ENCODE measurements at regions of chr11 and their contacts with region 1.

Region 1: GRCh38 chr11:61384271-61385242 is 7.8 kb upstream of the TMEM216 start:
- DNase-seq: no peak
- ATAC-seq: peak in 4 of 8 donors; percentile 10 to 29 (median 21)
- H3K4me3 ChIP-seq: no peak overlapping the region
- H3K27ac ChIP-seq: no peak overlapping the region
- H3K4me1 ChIP-seq: peaks cover 0 to 8% (median 4%) of the 10 kb centered on the region in 9 donors
- H3K27me3 ChIP-seq: no peaks in the 10 kb centered on the region
- CTCF ChIP-seq: no peak

Region 2: DNA sequence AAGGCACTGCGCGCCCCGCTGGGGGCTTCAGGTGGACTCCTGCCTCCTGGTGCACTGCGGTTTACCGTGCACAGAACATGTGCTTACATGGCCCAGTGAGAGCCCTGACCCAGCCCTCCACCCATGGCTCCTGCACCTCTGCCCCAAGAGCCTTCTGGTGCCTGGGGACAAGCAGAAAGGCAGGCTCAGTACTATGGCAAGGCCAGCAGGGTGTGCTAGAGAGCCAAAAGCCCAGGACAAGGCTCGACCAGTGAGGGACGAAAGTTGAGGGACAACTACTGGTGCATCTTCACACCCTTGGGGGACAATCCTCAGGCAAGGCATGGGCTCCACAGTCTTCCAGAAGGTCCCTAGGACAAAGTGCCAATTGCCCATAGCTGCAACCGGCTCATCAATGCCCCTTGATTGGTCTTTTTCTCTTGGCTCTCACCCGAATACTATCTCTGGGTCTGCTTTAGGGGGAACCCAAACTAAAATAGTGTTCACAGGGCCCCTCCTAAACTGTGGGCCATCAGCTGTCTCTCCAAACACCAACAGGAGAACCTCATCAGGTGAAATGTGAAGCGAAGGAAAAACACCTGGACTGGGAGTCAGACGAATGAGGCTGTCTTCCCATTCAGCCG is 130.0 kb before region 1 on chr11:
- intact Hi-C with region 1: loop called in 5 of 10 experiments (anchors 5 to 10 kb)
- DNase-seq: peak; percentile 44 to 57
- ATAC-seq: peak in 7 of 8 donors; percentile 30 to 73 (median 57)
- H3K4me3 ChIP-seq: no peak overlapping the region
- H3K27ac ChIP-seq: no peak overlapping the region
- H3K4me1 ChIP-seq: peaks cover 0 to 14% (median 0%) of the 10 kb centered on the region in 9 donors
- H3K27me3 ChIP-seq: no peaks in the 10 kb centered on the region
- CTCF ChIP-seq: peak; percentile 63 to 91 (median 81)

Region 3: GRCh38 chr11:61361686-61362541 is 22.6 kb before region 1 on chr11 and contains the starts of genes CYB561A3 and TMEM138:
- intact Hi-C with region 1: loop called in 1 of 10 experiments (anchors 2 kb)
- DNase-seq: peak; percentile 90
- ATAC-seq: peak; percentile 96 to 98 (median 98)
- H3K4me3 ChIP-seq: peak within 1 kb of the TSS; percentile 43 to 89 (median 76)
- H3K27ac ChIP-seq: peak within 1 kb of the TSS; percentile 93 to 100 (median 99)
- H3K4me1 ChIP-seq: peaks cover 3 to 48% (median 30%) of the 10 kb centered on the region in 9 donors
- H3K27me3 ChIP-seq: no peaks in the 10 kb centered on the region
- CTCF ChIP-seq: no peak
- total RNA-seq, gene CYB561A3: 6.0 to 18.6 (median 9.7) TPM
- total RNA-seq, gene TMEM138: 14.4 to 25.9 (median 17.6) TPM

Region 4: DNA sequence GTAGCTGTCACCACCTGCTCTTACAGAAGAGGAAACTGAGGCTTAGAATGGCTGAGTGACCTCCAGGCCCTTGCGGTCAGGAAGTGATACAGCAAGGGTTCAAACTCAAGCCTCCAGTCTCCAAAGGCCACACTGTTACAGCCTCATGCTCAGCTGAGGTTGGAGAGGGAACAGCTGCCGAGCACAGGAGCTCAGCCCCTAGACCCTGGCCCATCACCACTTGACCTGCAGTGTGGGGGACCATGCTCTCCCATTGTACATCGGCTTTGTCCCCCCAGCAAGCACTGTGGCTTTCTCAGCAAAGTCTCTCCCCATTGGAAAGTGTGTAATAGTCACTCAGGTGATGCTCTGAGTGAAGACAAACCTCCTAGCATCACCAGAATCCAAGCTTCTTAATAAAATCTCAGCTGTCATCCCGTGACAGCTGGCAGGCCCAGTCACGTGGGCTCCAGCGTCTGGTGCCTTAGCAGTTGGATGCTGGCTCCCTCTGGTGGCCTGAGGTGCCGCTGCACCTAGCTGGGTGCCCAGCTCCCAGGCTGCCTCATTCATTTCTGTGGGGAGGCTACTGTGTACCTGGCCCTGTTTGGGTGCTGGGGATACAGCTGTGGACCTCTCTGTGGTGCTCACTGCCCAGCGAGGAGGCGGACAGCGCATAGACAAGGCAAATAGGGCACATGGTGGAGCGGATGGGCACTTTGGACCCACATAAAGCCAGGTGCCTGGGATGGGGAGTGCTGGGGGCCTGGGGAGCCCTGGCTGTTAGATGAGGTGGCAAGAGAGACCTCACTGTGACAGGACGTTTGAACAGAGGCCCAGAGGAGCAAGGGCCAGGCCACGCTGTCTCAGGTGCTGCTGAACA is 348.8 kb after region 1 on chr11:
- intact Hi-C with region 1: no loop called
- DNase-seq: peak; percentile 84 to 88
- ATAC-seq: peak; percentile 71 to 94 (median 88)
- H3K4me3 ChIP-seq: no peak overlapping the region
- H3K27ac ChIP-seq: peak overlapping the region in 5 of 10 donors; percentile 0 to 50 (median 16)
- H3K4me1 ChIP-seq: peaks cover 0 to 27% (median 7%) of the 10 kb centered on the region in 9 donors
- H3K27me3 ChIP-seq: no peaks in the 10 kb centered on the region
- CTCF ChIP-seq: peak; percentile 98 to 100 (median 99)

Measured in heart right ventricle (tissue), 16 donors.